ENCODE measurements at regions of chr6 and their contacts with region 1.

Region 1: DNA sequence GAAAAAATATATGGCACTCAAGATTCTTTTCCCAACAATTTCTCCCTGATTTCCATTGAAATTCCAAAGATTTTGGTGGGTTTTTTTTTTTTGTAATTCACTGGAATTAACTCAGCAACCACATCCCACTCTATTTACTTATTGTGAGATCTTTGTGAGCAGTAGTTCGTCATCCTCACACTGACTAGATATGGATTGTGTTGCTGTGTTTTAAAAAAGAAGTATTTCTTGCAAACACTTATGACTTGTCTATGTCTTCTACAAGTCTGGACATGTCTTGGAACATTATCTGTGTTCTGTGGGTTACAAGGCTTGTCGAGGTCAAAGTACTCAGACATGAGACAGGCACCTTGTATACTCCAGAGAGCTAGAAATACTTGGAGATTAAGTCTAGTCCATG is 7.3 kb upstream of the TENT5A start:
- DNase-seq: no peak
- ATAC-seq: no peak
- H3K4me3 ChIP-seq: no peak overlapping the region
- H3K4me3 Mint-ChIP-seq: no peak overlapping the region
- H3K27ac ChIP-seq: no peak overlapping the region
- H3K27ac Mint-ChIP-seq: no peak overlapping the region
- H3K4me1 ChIP-seq: no peaks in the 10 kb centered on the region
- H3K4me1 Mint-ChIP-seq: no peaks in the 10 kb centered on the region
- H3K27me3 ChIP-seq: no peaks in the 10 kb centered on the region
- H3K27me3 Mint-ChIP-seq: no peaks in the 10 kb centered on the region
- CTCF ChIP-seq: no peak

Region 2: DNA sequence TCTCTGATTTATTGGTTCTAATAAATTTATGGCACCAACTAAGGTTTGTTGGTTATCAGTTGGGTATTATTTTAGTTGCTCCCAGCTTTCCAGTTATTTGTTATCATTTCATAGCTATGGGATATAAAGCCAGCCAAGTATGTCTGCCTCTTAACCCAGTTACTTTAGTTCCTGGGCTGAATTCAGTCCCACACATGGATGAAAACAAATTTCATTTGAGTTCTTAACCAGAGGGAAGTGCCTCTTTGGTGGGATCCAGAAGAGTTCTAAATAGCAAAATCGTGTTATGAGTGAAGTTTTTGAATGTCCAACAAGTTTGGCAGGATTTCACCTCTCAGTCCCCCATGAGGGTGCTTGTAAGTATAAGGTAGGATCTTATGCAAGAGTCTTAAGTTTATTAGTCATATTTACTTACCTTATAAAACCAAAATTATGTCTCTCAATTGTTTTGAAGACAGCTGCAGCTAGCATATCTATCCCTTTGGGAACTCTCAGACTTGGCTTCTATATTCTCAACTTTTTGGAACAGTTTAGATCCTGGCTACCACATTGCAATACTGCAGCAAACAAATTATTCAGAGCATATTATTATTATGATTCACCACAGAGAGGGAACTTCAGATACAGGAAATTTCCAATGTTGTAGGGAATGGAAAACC is 969.7 kb before region 1 on chr6:
- CTCF ChIA-PET with region 1: no interaction called
- POLR2A ChIA-PET with region 1: no interaction called
- intact Hi-C with region 1: loop called in 1 of 2 experiments (anchors 5 kb)
- DNase-seq: no peak
- ATAC-seq: no peak
- H3K4me3 ChIP-seq: no peak overlapping the region
- H3K4me3 Mint-ChIP-seq: no peak overlapping the region
- H3K27ac ChIP-seq: no peak overlapping the region
- H3K27ac Mint-ChIP-seq: no peak overlapping the region
- H3K4me1 ChIP-seq: no peaks in the 10 kb centered on the region
- H3K4me1 Mint-ChIP-seq: no peaks in the 10 kb centered on the region
- H3K27me3 ChIP-seq: no peaks in the 10 kb centered on the region
- H3K27me3 Mint-ChIP-seq: no peaks in the 10 kb centered on the region
- CTCF ChIP-seq: no peak

Region 3: GRCh38 chr6:81787313-81788068 is 27.7 kb after region 1 on chr6:
- CTCF ChIA-PET with region 1: no interaction called
- POLR2A ChIA-PET with region 1: no interaction called
- intact Hi-C with region 1: no loop called
- DNase-seq: no peak
- ATAC-seq: no peak
- H3K4me3 ChIP-seq: no peak overlapping the region
- H3K4me3 Mint-ChIP-seq: no peak overlapping the region
- H3K27ac ChIP-seq: no peak overlapping the region
- H3K27ac Mint-ChIP-seq: no peak overlapping the region
- H3K4me1 ChIP-seq: no peaks in the 10 kb centered on the region
- H3K4me1 Mint-ChIP-seq: no peaks in the 10 kb centered on the region
- H3K27me3 ChIP-seq: no peaks in the 10 kb centered on the region
- H3K27me3 Mint-ChIP-seq: peaks cover 2% of the 10 kb centered on the region
- CTCF ChIP-seq: no peak

Region 4: DNA sequence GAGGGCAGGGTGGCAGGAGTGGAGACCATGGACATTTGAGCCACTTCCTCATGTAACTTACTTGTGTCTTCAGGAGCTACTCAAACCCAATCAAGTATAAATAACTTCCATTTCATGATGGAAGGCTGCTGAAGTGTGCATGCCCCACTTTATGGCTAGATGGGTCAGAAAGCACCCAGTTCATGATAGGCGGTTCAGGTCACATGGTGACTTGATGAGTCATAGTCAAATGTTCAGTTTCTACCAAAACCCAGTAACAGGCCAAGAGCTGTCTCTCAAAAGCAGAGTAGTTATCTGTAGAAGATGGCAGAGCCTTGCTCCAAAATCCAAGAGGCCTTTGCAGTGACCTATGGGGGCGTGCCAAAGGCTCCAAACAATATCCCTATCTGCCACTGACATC is 126.4 kb after region 1 on chr6:
- CTCF ChIA-PET with region 1: no interaction called
- POLR2A ChIA-PET with region 1: no interaction called
- intact Hi-C with region 1: no loop called
- DNase-seq: no peak
- ATAC-seq: no peak
- H3K4me3 ChIP-seq: no peak overlapping the region
- H3K4me3 Mint-ChIP-seq: no peak overlapping the region
- H3K27ac ChIP-seq: no peak overlapping the region
- H3K27ac Mint-ChIP-seq: no peak overlapping the region
- H3K4me1 ChIP-seq: no peaks in the 10 kb centered on the region
- H3K4me1 Mint-ChIP-seq: no peaks in the 10 kb centered on the region
- H3K27me3 ChIP-seq: no peaks in the 10 kb centered on the region
- H3K27me3 Mint-ChIP-seq: no peaks in the 10 kb centered on the region
- CTCF ChIP-seq: no peak